ENCODE measurements at regions of chr1 and their contacts with region 1.

Region 1: GRCh38 chr1:32247983-32248889 is 1.2 kb downstream of the FAM167B start:
- DNase-seq: peak; percentile 78
- H3K4me3 Mint-ChIP-seq: peak overlapping the region; percentile 59
- H3K27ac Mint-ChIP-seq: peak overlapping the region; percentile 96
- H3K4me1 Mint-ChIP-seq: peaks cover 47% of the 10 kb centered on the region
- H3K27me3 Mint-ChIP-seq: no peaks in the 10 kb centered on the region

Region 2: DNA sequence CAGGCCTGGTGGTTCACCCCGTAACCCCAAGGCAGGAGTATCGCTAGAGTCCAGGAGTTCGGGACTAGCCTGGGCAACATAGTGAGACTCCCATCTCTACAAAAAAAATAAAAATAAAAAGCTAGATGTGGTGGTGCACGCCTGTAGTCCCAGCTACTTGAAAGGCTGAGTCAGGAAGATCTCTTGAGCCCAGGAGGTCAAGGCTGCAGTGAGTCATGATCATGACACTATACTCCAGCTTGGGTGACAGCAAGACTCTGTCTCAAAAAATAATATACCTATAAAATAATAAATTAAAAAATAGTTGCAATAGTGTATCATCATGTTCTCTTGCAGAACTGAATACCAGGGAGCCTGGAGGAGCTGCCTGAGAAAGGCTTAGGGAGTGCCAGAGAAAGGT is 195.3 kb before region 1 on chr1:
- CTCF ChIA-PET with region 1: no interaction called
- POLR2A ChIA-PET with region 1: no interaction called
- DNase-seq: no peak
- H3K4me3 Mint-ChIP-seq: no peak overlapping the region
- H3K27ac Mint-ChIP-seq: no peak overlapping the region
- H3K4me1 Mint-ChIP-seq: no peaks in the 10 kb centered on the region
- H3K27me3 Mint-ChIP-seq: no peaks in the 10 kb centered on the region

Region 3: GRCh38 chr1:32186077-32186476 is 62.2 kb before region 1 on chr1:
- CTCF ChIA-PET with region 1: no interaction called
- POLR2A ChIA-PET with region 1: no interaction called
- DNase-seq: no peak
- H3K4me3 Mint-ChIP-seq: no peak overlapping the region
- H3K27ac Mint-ChIP-seq: peak overlapping the region; percentile 86
- H3K4me1 Mint-ChIP-seq: peaks cover 52% of the 10 kb centered on the region
- H3K27me3 Mint-ChIP-seq: no peaks in the 10 kb centered on the region

Region 4: GRCh38 chr1:32228771-32229170 is 19.5 kb before region 1 on chr1:
- CTCF ChIA-PET with region 1: interaction called, 25 read pairs
- POLR2A ChIA-PET with region 1: no interaction called
- DNase-seq: no peak
- H3K4me3 Mint-ChIP-seq: no peak overlapping the region
- H3K27ac Mint-ChIP-seq: no peak overlapping the region
- H3K4me1 Mint-ChIP-seq: peaks cover 15% of the 10 kb centered on the region
- H3K27me3 Mint-ChIP-seq: no peaks in the 10 kb centered on the region

Region 5: DNA sequence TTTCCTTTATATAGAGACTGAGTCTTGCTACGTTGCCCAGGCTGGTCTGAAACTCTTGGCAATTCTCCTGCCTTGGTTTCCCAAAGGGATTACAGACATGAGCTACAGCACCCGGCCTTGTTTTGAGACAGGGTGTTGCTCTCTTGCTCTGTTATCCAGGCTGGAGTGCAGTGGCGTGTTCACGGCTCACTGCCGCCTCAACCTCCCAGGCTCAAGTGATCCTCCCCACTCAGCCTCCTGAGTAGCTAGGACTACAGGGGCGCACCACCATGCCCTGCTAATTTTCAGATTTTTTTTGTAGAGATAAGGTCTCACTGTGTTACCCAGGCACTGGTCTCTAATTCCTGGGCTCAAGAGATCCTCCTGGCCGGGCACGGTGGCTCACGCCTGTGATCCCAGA is 17.6 kb after region 1 on chr1:
- CTCF ChIA-PET with region 1: interaction called, 52 read pairs
- POLR2A ChIA-PET with region 1: interaction called, 3 read pairs
- DNase-seq: no peak
- H3K4me3 Mint-ChIP-seq: peak overlapping the region; percentile 38
- H3K27ac Mint-ChIP-seq: peak overlapping the region; percentile 82
- H3K4me1 Mint-ChIP-seq: peaks cover 55% of the 10 kb centered on the region
- H3K27me3 Mint-ChIP-seq: no peaks in the 10 kb centered on the region

Region 6: GRCh38 chr1:32291708-32292492 is 43.7 kb after region 1 on chr1 and contains the start of gene HDAC1:
- CTCF ChIA-PET with region 1: interaction called, 11 read pairs
- POLR2A ChIA-PET with region 1: interaction called, 5 read pairs
- DNase-seq: peak; percentile 97
- H3K4me3 Mint-ChIP-seq: peak within 1 kb of the TSS; percentile 100
- H3K27ac Mint-ChIP-seq: peak within 1 kb of the TSS; percentile 97
- H3K4me1 Mint-ChIP-seq: peaks cover 59% of the 10 kb centered on the region
- H3K27me3 Mint-ChIP-seq: no peaks in the 10 kb centered on the region
- total RNA-seq, gene HDAC1: 226 to 230 TPM

Region 7: GRCh38 chr1:32377541-32378220 is 129.4 kb after region 1 on chr1:
- CTCF ChIA-PET with region 1: no interaction called
- POLR2A ChIA-PET with region 1: no interaction called
- DNase-seq: no peak
- H3K4me3 Mint-ChIP-seq: no peak overlapping the region
- H3K27ac Mint-ChIP-seq: peak overlapping the region; percentile 71
- H3K4me1 Mint-ChIP-seq: peaks cover 7% of the 10 kb centered on the region
- H3K27me3 Mint-ChIP-seq: no peaks in the 10 kb centered on the region